Panc1 (cell line): ENCODE measurements at regions of chr5 and their contacts with region 1.

Region 1: DNA sequence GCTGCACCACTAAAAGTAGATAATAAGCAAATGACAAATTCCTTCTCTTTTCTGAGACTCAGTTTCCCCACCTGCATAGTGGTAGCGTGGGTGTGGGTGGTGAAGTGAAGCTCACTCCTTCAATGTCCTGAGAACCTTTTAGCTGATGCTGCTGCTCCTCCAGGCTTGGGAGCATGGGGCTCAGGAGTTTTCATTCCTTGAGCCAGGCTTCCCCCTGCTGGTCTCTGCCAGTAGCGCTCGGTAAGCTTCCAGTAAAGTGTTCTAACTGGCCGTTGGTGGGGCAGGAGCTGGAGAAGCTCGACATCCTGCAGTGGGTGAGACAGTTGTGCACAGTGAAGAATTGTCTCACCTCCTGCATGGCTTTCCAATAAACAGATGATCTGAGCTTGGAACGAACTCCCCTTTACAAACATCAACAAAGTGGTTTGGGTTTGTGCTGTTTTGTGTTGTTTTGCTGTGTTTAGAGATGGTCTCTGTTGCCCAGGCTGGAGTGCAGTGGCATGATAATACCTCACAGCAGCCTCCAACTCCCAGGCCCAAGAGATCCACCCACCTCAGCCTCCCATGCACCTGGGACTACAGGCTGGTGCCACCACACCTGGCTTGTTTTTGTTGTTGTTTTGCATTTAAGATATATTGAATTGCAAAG is 34.6 kb downstream of the SPARC start:
- DNase-seq: peak; percentile 73
- ATAC-seq: peak; percentile 99
- H3K4me3 ChIP-seq: no peak overlapping the region
- H3K27ac ChIP-seq: peak overlapping the region; percentile 37
- H3K4me1 ChIP-seq: peaks cover 4% of the 10 kb centered on the region; the same call in 1 of the 2 replicates
- H3K27me3 ChIP-seq: no peaks in the 10 kb centered on the region
- CTCF ChIP-seq: peak; percentile 94

Region 2: GRCh38 chr5:150778517-150779396 is 873.4 kb before region 1 on chr5 and contains the start of gene SMIM3:
- CTCF ChIA-PET with region 1: interaction called, 15 read pairs
- POLR2A ChIA-PET with region 1: no interaction called
- in situ Hi-C with region 1: no loop called
- intact Hi-C with region 1: no loop called
- DNase-seq: no peak
- ATAC-seq: peak; percentile 82
- H3K4me3 ChIP-seq: peak within 1 kb of the TSS; percentile 87 to 88
- H3K27ac ChIP-seq: peak within 1 kb of the TSS; percentile 86
- H3K4me1 ChIP-seq: peaks cover 54% of the 10 kb centered on the region
- H3K27me3 ChIP-seq: no peaks in the 10 kb centered on the region
- CTCF ChIP-seq: peak; percentile 79
- total RNA-seq, gene SMIM3: 55.2 TPM

Region 3: DNA sequence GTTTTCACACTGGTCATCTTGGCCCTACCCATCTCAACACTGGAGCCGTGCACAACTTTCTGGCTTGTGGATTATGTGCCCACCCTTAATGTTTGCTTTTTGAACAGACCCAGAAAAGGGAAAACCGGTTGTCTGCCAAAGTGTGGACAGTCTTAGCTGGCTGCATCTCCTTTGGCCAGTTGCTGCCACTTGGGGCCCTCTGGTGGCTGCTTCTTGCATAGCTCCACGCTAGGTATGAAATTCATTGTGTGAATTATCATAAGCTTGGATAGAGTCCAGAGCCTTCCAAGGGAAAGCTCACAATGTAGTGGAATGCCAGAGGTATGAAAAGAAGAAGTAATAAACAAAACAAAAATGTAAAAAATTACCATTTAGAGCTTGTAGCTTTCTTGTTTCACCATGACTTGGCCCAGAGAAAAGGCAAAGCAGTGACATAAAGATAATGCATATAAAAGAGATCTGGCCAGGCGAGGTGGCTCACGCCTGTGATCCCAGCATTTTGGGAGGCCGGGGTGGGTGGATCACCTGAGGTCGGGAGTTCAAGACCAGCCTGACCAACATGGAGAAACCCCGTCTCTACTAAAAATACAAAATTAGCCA is 336.0 kb before region 1 on chr5:
- CTCF ChIA-PET with region 1: interaction called, 3 read pairs
- POLR2A ChIA-PET with region 1: no interaction called
- in situ Hi-C with region 1: no loop called
- intact Hi-C with region 1: loop called (anchors 5 kb)
- DNase-seq: peak; percentile 58
- ATAC-seq: peak; percentile 90
- H3K4me3 ChIP-seq: no peak overlapping the region
- H3K27ac ChIP-seq: no peak overlapping the region
- H3K4me1 ChIP-seq: no peaks in the 10 kb centered on the region
- H3K27me3 ChIP-seq: peaks cover 2% of the 10 kb centered on the region; the same call in 1 of the 2 replicates
- CTCF ChIP-seq: peak; percentile 94

Region 4: GRCh38 chr5:151447174-151448037 is 204.7 kb before region 1 on chr5 and contains the start of gene SLC36A1:
- CTCF ChIA-PET with region 1: interaction called, 29 read pairs
- POLR2A ChIA-PET with region 1: no interaction called
- in situ Hi-C with region 1: no loop called
- intact Hi-C with region 1: loop called (anchors 1 kb)
- DNase-seq: peak; percentile 80
- ATAC-seq: peak; percentile 94
- H3K4me3 ChIP-seq: peak within 1 kb of the TSS; percentile 75 to 96
- H3K27ac ChIP-seq: peak within 1 kb of the TSS; percentile 78
- H3K4me1 ChIP-seq: peaks cover 6% of the 10 kb centered on the region
- H3K27me3 ChIP-seq: no peaks in the 10 kb centered on the region
- CTCF ChIP-seq: peak; percentile 96
- total RNA-seq, gene SLC36A1: 13.6 TPM

Region 5: GRCh38 chr5:151523335-151523734 is 128.8 kb before region 1 on chr5:
- CTCF ChIA-PET with region 1: interaction called, 16 read pairs
- POLR2A ChIA-PET with region 1: no interaction called
- in situ Hi-C with region 1: no loop called
- intact Hi-C with region 1: loop called (anchors 1 kb)
- DNase-seq: peak; percentile 41
- ATAC-seq: peak; percentile 92
- H3K4me3 ChIP-seq: no peak overlapping the region
- H3K27ac ChIP-seq: no peak overlapping the region
- H3K4me1 ChIP-seq: no peaks in the 10 kb centered on the region
- H3K27me3 ChIP-seq: 0 out of 2 replicates have a peak, but pooled peaks cover 6% of the 10 kb centered on the region
- CTCF ChIP-seq: peak; percentile 80

Region 6: GRCh38 chr5:151740336-151740942 is 88.3 kb after region 1 on chr5:
- CTCF ChIA-PET with region 1: interaction called, 25 read pairs
- POLR2A ChIA-PET with region 1: no interaction called
- in situ Hi-C with region 1: no loop called
- intact Hi-C with region 1: no loop called
- DNase-seq: peak; percentile 54
- ATAC-seq: peak; percentile 75
- H3K4me3 ChIP-seq: no peak overlapping the region
- H3K27ac ChIP-seq: peak overlapping the region; percentile 90
- H3K4me1 ChIP-seq: peaks cover 45% of the 10 kb centered on the region
- H3K27me3 ChIP-seq: no peaks in the 10 kb centered on the region
- CTCF ChIP-seq: peak; percentile 92